Heart right ventricle (tissue), 16 donors: ENCODE measurements at regions of chrX and their contacts with region 1.

Region 1: DNA sequence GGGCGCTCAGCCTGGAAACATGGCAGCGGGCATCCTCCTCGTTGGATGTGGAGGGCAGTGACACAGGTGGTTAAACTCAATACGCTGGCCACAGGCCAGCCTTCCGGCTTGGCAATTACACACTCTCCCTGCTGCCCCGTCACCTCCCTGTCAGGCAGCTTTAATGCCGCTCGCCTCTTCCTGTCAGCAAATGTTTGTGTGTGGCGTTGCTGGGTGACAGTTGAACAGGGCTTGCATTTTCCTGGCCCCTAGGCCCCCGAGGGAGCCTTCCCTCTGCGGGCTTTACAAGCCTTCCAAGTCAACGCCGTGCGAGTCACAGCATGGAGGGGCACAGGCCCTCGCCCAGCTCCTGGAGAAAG is 620.0 kb downstream of the BCOR start:
- DNase-seq: peak; percentile 77 to 78
- ATAC-seq: peak; percentile 80 to 91 (median 88)
- H3K4me3 ChIP-seq: no peak overlapping the region
- H3K27ac ChIP-seq: peak overlapping the region in 8 of 10 donors; percentile 23 to 67 (median 62)
- H3K4me1 ChIP-seq: peaks cover 0 to 30% (median 7%) of the 10 kb centered on the region in 9 donors
- H3K27me3 ChIP-seq: peaks cover 0 to 23% (median 0%) of the 10 kb centered on the region in 7 donors
- CTCF ChIP-seq: no peak

Region 2: DNA sequence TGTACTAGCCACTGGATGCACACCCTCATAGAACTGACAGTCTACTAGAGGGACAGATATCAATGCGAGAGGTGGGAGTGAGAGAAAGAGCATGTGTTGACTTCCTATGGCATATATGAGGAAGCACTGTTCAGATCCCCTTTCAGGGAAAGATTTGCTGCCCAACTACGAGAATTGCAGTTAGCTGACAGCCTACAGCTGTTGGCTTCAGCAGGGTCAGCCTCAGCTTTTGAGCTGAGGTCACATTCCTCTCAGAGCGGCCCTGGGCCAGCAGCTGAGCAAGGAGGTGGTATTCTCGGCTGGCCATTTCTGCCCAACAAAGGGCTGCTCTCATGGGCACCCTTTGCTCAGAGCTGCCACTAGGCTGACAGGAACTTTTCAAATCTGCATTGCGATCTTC is 96.3 kb before region 1 on chrX:
- intact Hi-C with region 1: no loop called
- DNase-seq: no peak
- ATAC-seq: no peak
- H3K4me3 ChIP-seq: no peak overlapping the region
- H3K27ac ChIP-seq: no peak overlapping the region
- H3K4me1 ChIP-seq: no peaks in the 10 kb centered on the region
- H3K27me3 ChIP-seq: peaks cover 0 to 40% (median 0%) of the 10 kb centered on the region in 7 donors
- CTCF ChIP-seq: no peak

Region 3: DNA sequence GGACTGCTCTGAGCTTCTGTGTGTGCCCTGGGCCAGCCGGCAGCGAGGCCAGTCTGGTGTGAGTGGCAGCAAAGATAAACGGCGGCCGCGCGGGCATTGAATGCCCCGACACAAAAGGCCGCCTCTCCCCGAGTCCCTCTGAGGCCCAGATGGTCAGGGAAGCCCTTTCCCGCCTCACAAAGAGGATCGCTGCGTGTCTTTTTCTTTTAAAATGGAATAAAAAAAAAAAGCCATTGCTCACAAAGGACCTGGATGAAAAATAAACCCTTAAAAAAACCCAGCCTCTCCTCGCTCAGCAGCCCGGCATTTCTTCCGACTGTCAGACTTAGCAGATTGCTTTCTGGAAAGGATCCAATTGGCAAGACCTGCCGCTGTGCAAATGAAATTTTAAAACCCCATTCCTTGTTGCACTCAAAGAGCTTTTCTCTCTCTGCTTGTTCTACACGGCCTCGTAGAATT is 41.3 kb after region 1 on chrX:
- intact Hi-C with region 1: loop called in 2 of 10 experiments (anchors 2 kb)
- DNase-seq: peak in 1 of 2 donors; percentile 44
- ATAC-seq: peak; percentile 16 to 65 (median 54)
- H3K4me3 ChIP-seq: peak overlapping the region in 6 of 10 donors; percentile 9 to 32 (median 24)
- H3K27ac ChIP-seq: peak overlapping the region; percentile 40 to 87 (median 71)
- H3K4me1 ChIP-seq: peaks cover 0 to 21% (median 0%) of the 10 kb centered on the region in 9 donors
- H3K27me3 ChIP-seq: peaks cover 0 to 59% (median 0%) of the 10 kb centered on the region in 7 donors
- CTCF ChIP-seq: no peak

Region 4: GRCh38 chrX:39532761-39533160 is 55.0 kb after region 1 on chrX:
- intact Hi-C with region 1: no loop called
- DNase-seq: no peak
- ATAC-seq: no peak
- H3K4me3 ChIP-seq: no peak overlapping the region
- H3K27ac ChIP-seq: no peak overlapping the region
- H3K4me1 ChIP-seq: no peaks in the 10 kb centered on the region
- H3K27me3 ChIP-seq: peaks cover 0 to 31% (median 0%) of the 10 kb centered on the region in 7 donors
- CTCF ChIP-seq: no peak

Region 5: DNA sequence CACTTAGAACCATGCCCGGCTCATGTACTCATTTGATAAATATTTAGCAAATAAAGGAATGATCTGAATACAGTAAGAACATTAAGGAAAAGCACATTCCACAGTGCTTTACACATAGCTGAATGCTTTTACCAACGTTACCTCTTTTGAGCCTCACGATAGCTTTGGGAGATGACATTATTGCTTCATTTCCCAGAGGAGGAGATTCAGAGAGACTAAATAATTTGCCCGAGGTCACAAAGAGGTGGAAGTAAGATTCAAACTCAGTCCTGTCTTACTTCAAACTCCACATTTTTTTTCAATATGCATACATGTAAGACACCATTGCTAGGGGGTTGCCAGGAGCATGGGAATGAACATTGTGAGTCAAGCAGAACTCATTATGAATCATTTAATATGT is 81.5 kb after region 1 on chrX:
- intact Hi-C with region 1: no loop called
- DNase-seq: no peak
- ATAC-seq: no peak
- H3K4me3 ChIP-seq: no peak overlapping the region
- H3K27ac ChIP-seq: no peak overlapping the region
- H3K4me1 ChIP-seq: no peaks in the 10 kb centered on the region
- H3K27me3 ChIP-seq: peaks cover 0 to 18% (median 0%) of the 10 kb centered on the region in 7 donors
- CTCF ChIP-seq: no peak

Region 6: GRCh38 chrX:40097497-40098263 is 619.9 kb after region 1 on chrX and contains the start of gene BCOR:
- intact Hi-C with region 1: loop called in 1 of 10 experiments (anchors 10 kb)
- DNase-seq: peak; percentile 72 to 80
- ATAC-seq: peak; percentile 26 to 63 (median 56)
- H3K4me3 ChIP-seq: peak within 1 kb of the TSS; percentile 70 to 88 (median 82)
- H3K27ac ChIP-seq: peak within 1 kb of the TSS; percentile 84 to 94 (median 92)
- H3K4me1 ChIP-seq: peaks cover 0 to 40% (median 17%) of the 10 kb centered on the region in 9 donors
- H3K27me3 ChIP-seq: peaks cover 0 to 99% (median 0%) of the 10 kb centered on the region in 7 donors
- CTCF ChIP-seq: peak in 1 of 9 donors; percentile 20
- total RNA-seq, gene BCOR: 12.4 to 27.2 (median 19.9) TPM